ENCODE measurements at regions of chr17 and their contacts with region 1.

Region 1: DNA sequence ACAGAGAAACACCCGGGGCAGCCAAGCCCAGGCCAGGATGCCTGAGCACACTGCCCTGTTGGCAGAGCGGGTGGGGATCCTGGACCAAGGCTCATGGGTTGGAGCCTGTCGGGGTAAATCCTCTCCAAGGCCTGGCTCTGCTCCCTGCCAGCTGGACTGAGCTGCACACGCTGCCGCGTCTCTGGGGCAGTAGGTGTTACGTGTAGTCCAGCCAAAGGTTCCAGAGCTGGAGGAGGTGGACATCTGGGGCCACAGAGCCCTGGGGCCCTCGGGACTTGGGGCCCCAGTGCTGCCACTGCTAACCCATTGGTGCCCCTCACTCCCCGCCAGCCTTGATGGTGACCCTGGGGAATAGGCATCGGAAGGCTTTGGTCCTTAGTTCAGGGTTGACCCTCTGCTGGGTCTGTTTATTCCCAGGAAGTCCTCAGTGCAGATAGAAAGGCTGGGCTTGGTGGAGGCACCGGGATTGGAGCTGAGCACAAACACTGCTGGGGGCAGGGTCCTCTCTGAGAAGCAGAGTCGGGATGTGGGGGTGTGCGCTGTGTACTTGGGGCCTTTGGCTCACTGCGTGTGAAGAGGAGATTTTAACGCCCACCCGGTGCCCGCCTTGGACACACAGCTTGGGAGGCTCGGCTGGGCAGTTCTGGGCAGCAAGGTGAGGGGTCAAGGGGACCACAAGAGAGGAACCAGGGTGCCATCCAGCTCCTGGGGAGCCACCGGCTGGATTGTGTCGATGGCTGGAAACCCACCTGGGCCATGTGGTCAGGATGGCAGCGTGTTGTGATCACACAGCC is 16.3 kb upstream of the CBX4 start:
- DNase-seq: no peak
- H3K4me3 ChIP-seq: no peak overlapping the region
- H3K27ac ChIP-seq: no peak overlapping the region
- H3K4me1 ChIP-seq: peaks cover 0 to under 1% (median 0%) of the 10 kb centered on the region in 4 experiments; a peak in 2 of 7 replicates
- H3K27me3 ChIP-seq: 0 out of 7 replicates have a peak, but pooled peaks cover 0 to 2% (median 0%) of the 10 kb centered on the region in 4 experiments
- CTCF ChIP-seq: no peak
- EP300 ChIP-seq: no peak
- POLR2A ChIP-seq: no peak
- RAD21 ChIP-seq: no peak

Region 2: DNA sequence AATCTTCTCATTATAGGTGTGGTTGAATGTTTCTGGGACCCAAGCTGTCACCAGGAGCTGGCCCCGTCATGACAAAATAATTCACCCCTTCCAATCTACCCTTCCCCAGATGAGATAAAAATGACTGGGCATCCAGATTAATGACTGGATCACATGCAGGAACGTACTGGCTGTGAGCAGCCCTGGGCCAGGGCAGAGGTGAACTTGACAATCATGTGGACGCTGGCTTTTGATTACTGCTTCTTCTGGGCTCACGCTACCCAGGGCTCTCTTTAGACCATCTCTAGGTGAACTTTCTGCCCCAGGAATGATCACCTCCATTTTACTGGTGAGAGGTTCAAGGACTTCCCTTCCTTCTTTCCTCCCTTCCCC is 34.6 kb before region 1 on chr17:
- CTCF ChIA-PET with region 1: no interaction called
- POLR2A ChIA-PET with region 1: no interaction called
- DNase-seq: no peak
- H3K4me3 ChIP-seq: no peak overlapping the region
- H3K27ac ChIP-seq: no peak overlapping the region
- H3K4me1 ChIP-seq: peaks cover 0 to 5% (median 0%) of the 10 kb centered on the region in 4 experiments; a peak in 3 of 7 replicates
- H3K27me3 ChIP-seq: peaks cover 35 to 77% (median 62%) of the 10 kb centered on the region in 4 experiments
- CTCF ChIP-seq: no peak
- EP300 ChIP-seq: no peak
- POLR2A ChIP-seq: no peak
- RAD21 ChIP-seq: no peak

Region 3: DNA sequence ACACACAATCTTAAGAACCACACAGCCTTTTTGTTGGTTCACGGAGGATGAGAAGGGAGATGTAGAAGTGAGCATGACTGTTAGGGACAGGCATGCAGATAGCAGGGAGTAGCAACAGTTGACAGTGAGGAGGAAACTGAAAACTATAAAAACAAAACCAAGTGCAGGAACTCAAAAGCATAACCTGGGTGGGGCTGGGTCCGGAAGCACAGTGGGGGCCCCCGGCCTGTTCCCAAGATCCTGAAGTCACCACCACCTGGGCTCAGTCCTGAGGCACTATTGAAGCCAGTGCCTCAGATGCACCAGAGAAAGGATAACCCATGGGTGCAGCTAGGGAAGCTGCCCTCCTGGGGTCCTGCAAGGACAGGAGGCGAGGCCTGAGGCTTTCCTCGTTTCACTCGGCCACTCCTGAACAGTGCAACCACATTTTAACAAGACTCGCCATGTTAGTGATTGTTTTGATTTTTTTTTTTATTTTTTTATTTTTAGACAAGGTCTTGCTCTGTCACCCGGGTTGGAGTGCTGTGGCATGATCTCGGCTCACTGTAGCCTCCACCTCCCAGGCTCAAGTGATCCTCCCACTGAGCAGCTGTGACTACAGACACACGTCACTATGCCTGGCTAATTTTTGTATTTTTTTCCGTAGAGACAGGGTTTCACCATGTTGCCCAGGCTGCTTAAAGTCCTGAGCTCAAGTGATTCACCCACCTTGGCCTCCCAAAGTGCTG is 11.4 kb after region 1 on chr17:
- CTCF ChIA-PET with region 1: interaction called, 10 read pairs
- POLR2A ChIA-PET with region 1: interaction called, 4 read pairs
- DNase-seq: no peak
- H3K4me3 ChIP-seq: no peak overlapping the region
- H3K27ac ChIP-seq: no peak overlapping the region
- H3K4me1 ChIP-seq: peaks cover 0 to 11% (median 4%) of the 10 kb centered on the region in 4 experiments; a peak in 6 of 7 replicates
- H3K27me3 ChIP-seq: no peaks in the 10 kb centered on the region; a peak in 2 of 7 replicates
- CTCF ChIP-seq: no peak
- EP300 ChIP-seq: no peak
- POLR2A ChIP-seq: no peak
- RAD21 ChIP-seq: no peak

Measured in H1 (cell line).